Naive thymus-derived CD8-positive, alpha-beta T cell (primary cell): ENCODE measurements at regions of chr19 and their contacts with region 1.

Region 1: GRCh38 chr19:34253699-34254551 is 429 bp upstream of the GARRE1 start:
- DNase-seq: peak in 5 of 10 donors; percentile 74 to 88 (median 79)
- ATAC-seq: peak; percentile 39 to 47
- H3K4me3 Mint-ChIP-seq: peak overlapping the region; percentile 85 to 99 (median 97)
- H3K27ac Mint-ChIP-seq: peak overlapping the region; percentile 94 to 99 (median 98)
- H3K4me1 Mint-ChIP-seq: peaks cover 9 to 43% (median 34%) of the 10 kb centered on the region in 4 donors
- H3K27me3 Mint-ChIP-seq: no peaks in the 10 kb centered on the region

Region 2: DNA sequence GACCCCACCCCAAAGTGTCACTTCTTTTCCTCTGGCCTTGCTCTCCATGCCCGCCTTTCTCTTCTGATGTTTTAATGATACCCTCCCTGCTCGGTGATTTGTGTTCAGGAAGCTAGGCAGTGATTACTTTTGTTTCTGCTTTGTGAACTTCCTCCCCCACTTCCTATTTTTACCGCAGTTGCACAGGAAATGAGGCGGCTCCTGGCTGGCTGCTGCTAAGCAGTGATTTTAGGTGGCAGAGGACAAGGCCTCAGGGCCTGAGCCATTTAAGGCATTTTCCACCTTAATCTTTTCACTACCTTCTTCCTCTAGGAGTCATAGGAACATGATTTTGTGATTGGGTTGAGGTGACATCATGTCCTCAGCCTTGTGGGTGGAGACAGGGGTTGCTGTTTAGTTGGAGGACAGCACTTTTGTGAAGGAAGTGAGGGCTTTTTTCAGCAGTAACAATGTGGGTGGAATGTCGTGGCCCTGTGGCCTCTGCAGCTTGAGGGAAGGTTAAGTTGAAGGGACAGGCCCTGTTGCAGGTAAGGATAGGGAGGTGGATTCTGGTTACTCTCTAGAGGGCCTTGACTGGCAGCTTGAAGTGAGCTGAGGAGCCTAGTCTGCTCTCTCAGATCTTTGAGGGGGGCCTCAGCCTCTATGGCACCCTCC is 16.2 kb after region 1 on chr19:
- POLR2A ChIA-PET with region 1: interaction called, 59 read pairs
- DNase-seq: peak; percentile 41 to 90 (median 78)
- ATAC-seq: peak; percentile 89 to 90
- H3K4me3 Mint-ChIP-seq: peak overlapping the region; percentile 68 to 90 (median 80)
- H3K27ac Mint-ChIP-seq: peak overlapping the region; percentile 86 to 99 (median 96)
- H3K4me1 Mint-ChIP-seq: peaks cover 50 to 91% (median 80%) of the 10 kb centered on the region in 4 donors
- H3K27me3 Mint-ChIP-seq: no peaks in the 10 kb centered on the region

Region 3: DNA sequence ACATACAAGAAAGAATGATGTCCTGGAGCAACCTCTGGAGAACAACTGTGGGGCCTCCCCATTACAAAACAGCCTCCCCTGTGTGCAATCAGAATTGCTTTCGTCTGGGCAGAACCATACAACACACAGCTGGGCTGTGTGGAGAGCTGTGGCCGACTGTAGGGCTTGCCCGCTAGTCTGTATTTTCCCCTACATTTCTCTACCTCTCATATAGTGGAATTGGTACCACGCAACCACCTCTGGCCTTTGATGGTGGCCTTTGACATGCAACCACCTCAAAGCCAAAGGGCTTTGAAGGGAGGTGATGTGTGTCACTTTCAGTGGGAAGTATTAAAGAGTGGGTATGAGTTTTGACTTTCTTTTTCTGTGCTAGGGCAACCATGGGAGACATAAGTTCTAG is 34.5 kb after region 1 on chr19:
- POLR2A ChIA-PET with region 1: no interaction called
- DNase-seq: no peak
- ATAC-seq: peak in 1 of 2 donors; percentile 20
- H3K4me3 Mint-ChIP-seq: peak overlapping the region in 2 of 10 donors; percentile 5 to 9
- H3K27ac Mint-ChIP-seq: peak overlapping the region in 8 of 10 donors; percentile 7 to 83 (median 56)
- H3K4me1 Mint-ChIP-seq: peaks cover 5 to 35% (median 17%) of the 10 kb centered on the region in 4 donors
- H3K27me3 Mint-ChIP-seq: no peaks in the 10 kb centered on the region

Region 4: DNA sequence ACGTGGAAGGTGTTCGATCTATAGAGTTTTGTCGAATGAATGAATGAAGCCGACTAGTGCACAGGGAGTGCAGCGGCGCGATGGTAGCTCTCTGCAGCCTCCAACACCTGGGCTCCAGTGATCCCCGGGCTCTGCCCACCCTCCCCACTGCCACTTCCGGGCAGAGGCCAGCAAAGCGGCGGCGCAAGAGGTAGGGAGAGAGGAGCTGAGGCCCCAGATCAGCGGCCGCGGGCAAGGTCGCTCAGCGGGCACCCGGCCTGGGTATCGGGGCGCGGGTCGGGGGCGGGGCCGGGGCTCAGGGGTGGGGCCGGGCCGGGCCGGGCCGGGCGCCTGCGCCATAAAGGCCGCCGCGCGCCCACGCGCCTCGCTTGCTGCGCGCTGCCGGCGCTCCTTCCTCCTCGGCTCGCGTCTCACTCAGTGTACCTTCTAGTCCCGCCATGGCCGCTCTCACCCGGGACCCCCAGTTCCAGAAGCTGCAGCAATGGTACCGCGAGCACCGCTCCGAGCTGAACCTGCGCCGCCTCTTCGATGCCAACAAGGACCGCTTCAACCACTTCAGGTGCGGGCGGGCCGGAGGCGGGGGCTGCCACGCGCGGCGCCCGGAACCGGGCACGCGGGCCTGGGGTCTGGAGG is 111.0 kb after region 1 on chr19 and contains the start of gene GPI:
- POLR2A ChIA-PET with region 1: no interaction called
- DNase-seq: peak; percentile 51 to 76 (median 65)
- ATAC-seq: peak; percentile 91 to 92
- H3K4me3 Mint-ChIP-seq: peak within 1 kb of the TSS; percentile 92 to 98 (median 95)
- H3K27ac Mint-ChIP-seq: peak within 1 kb of the TSS; percentile 80 to 95 (median 93)
- H3K4me1 Mint-ChIP-seq: peaks cover 20 to 41% (median 35%) of the 10 kb centered on the region in 4 donors
- H3K27me3 Mint-ChIP-seq: no peaks in the 10 kb centered on the region
- polyA plus RNA-seq, gene GPI: 126 to 179 (median 142) TPM